ENCODE measurements at regions of chr11 and their contacts with region 1.

Region 1: GRCh38 chr11:126062679-126063506 is at the start of gene CDON:
- H3K4me3 ChIP-seq: peak within 1 kb of the TSS; percentile 62
- H3K27ac ChIP-seq: peak within 1 kb of the TSS; percentile 99
- H3K4me1 ChIP-seq: peaks cover 13% of the 10 kb centered on the region
- CTCF ChIP-seq: 0 out of 2 replicates have a peak, but pooled peaks have one; percentile 37

Region 2: GRCh38 chr11:125923012-125923579 is 139.8 kb before region 1 on chr11:
- CTCF ChIA-PET with region 1: interaction called, 18 read pairs
- POLR2A ChIA-PET with region 1: no interaction called
- H3K4me3 ChIP-seq: no peak overlapping the region
- H3K27ac ChIP-seq: no peak overlapping the region
- H3K4me1 ChIP-seq: no peaks in the 10 kb centered on the region
- CTCF ChIP-seq: peak; percentile 60

Region 3: GRCh38 chr11:125935618-125936199 is 127.2 kb before region 1 on chr11:
- CTCF ChIA-PET with region 1: interaction called, 11 read pairs
- POLR2A ChIA-PET with region 1: no interaction called
- H3K4me3 ChIP-seq: no peak overlapping the region
- H3K27ac ChIP-seq: no peak overlapping the region
- H3K4me1 ChIP-seq: no peaks in the 10 kb centered on the region
- CTCF ChIP-seq: no peak

Region 4: GRCh38 chr11:126051117-126051516 is 11.8 kb before region 1 on chr11:
- CTCF ChIA-PET with region 1: interaction called, 10 read pairs
- POLR2A ChIA-PET with region 1: interaction called, 5 read pairs
- H3K4me3 ChIP-seq: no peak overlapping the region
- H3K27ac ChIP-seq: 0 out of 2 replicates have a peak overlapping the region, but pooled peaks have one; percentile 57
- H3K4me1 ChIP-seq: peaks cover 2% of the 10 kb centered on the region; the same call in 1 of the 2 replicates
- CTCF ChIP-seq: no peak

Region 5: GRCh38 chr11:126194121-126194543 is 131.2 kb after region 1 on chr11:
- CTCF ChIA-PET with region 1: interaction called, 10 read pairs
- POLR2A ChIA-PET with region 1: no interaction called
- H3K4me3 ChIP-seq: no peak overlapping the region
- H3K27ac ChIP-seq: no peak overlapping the region
- H3K4me1 ChIP-seq: no peaks in the 10 kb centered on the region
- CTCF ChIP-seq: peak; percentile 27; the same call in 1 of the 2 replicates